ENCODE measurements at regions of chr16 and their contacts with region 1.

Region 1: DNA sequence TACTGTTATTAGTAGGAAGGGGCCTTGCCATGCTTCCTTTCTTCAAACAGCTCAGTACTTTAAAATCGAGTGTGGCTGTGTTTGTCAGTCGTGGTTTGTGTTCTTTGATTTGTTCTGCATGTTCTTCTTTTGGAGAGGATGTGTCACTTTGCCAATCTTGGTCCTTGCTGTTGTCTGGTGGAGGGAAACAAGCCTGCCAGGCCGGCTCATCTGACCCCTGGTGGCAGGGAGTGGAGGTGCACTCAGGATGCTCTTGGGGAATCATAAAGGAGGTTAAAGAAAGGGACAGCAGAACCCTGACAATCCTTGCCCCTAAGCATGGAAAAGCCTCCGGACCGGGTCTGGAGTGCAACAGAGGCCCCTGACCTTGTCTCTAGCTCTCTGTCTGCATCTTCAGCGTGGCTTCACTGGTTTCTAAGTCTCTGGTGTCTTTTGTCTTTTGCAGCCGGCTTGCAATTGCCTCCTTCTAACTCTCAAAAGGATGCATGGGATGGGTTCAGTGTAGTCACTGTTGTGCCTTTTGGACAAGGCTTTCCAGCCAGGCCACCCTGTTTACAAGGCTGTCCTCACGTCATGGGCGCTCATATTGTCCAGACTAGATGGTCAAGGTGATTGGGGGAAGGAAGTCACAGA is 135.8 kb downstream of the WWOX start:
- DNase-seq: peak; percentile 78 to 81
- H3K4me3 ChIP-seq: no peak overlapping the region
- H3K27ac ChIP-seq: no peak overlapping the region
- H3K4me1 ChIP-seq: peaks cover 0 to 22% (median 2%) of the 10 kb centered on the region in 4 donors
- H3K27me3 ChIP-seq: no peaks in the 10 kb centered on the region
- CTCF ChIP-seq: peak in 5 of 7 experiments; percentile 83 to 95 (median 90)
- EP300 ChIP-seq: no peak
- POLR2A ChIP-seq: no peak

Region 2: DNA sequence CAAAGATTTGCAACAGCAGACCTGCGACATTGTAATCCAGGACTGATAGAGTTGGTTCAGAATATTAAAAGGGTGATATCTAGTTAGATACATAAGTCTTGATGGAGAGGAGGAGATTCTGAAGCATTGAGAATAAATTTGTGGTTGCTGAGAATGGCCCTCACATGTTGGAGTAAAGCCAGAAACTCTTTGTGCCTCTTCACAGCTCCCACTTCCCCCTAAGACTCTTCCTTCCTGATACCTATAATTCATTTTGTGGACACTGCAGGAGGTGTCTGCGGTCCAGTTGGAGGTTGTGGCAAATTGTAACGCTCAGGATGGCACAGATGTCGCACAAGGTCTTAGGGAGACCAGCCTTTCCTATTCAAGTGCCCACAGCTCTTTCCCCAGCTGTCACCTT is 118.3 kb before region 1 on chr16:
- intact Hi-C with region 1: loop called (anchors 10 kb)
- DNase-seq: no peak
- H3K4me3 ChIP-seq: no peak overlapping the region
- H3K27ac ChIP-seq: no peak overlapping the region
- H3K4me1 ChIP-seq: peaks cover 0 to 9% (median 3%) of the 10 kb centered on the region in 4 donors
- H3K27me3 ChIP-seq: no peaks in the 10 kb centered on the region
- CTCF ChIP-seq: no peak
- EP300 ChIP-seq: no peak
- POLR2A ChIP-seq: no peak

Region 3: GRCh38 chr16:78200623-78201096 is 34.6 kb before region 1 on chr16:
- intact Hi-C with region 1: no loop called
- DNase-seq: peak in 1 of 2 donors; percentile 16
- H3K4me3 ChIP-seq: no peak overlapping the region
- H3K27ac ChIP-seq: peak overlapping the region in 4 of 5 donors; percentile 18 to 50 (median 32)
- H3K4me1 ChIP-seq: peaks cover 0 to 22% (median 18%) of the 10 kb centered on the region in 4 donors
- H3K27me3 ChIP-seq: no peaks in the 10 kb centered on the region
- CTCF ChIP-seq: no peak
- EP300 ChIP-seq: no peak
- POLR2A ChIP-seq: no peak